ENCODE measurements at regions of chr19 and their contacts with region 1.

Region 1: GRCh38 chr19:21020298-21021227 is at the start of gene ZNF430:
- DNase-seq: peak; percentile 94
- ATAC-seq: peak; percentile 96
- H3K4me3 ChIP-seq: peak within 1 kb of the TSS; percentile 78
- H3K27ac ChIP-seq: peak within 1 kb of the TSS; percentile 89
- H3K4me1 ChIP-seq: no peaks in the 10 kb centered on the region
- H3K27me3 ChIP-seq: no peaks in the 10 kb centered on the region
- CTCF ChIP-seq: no peak
- EP300 ChIP-seq: no peak
- POLR2A ChIP-seq: peak; percentile 91
- RAD21 ChIP-seq: no peak
- polyA plus RNA-seq, gene ZNF430: 4.6 to 6.0 TPM

Region 2: DNA sequence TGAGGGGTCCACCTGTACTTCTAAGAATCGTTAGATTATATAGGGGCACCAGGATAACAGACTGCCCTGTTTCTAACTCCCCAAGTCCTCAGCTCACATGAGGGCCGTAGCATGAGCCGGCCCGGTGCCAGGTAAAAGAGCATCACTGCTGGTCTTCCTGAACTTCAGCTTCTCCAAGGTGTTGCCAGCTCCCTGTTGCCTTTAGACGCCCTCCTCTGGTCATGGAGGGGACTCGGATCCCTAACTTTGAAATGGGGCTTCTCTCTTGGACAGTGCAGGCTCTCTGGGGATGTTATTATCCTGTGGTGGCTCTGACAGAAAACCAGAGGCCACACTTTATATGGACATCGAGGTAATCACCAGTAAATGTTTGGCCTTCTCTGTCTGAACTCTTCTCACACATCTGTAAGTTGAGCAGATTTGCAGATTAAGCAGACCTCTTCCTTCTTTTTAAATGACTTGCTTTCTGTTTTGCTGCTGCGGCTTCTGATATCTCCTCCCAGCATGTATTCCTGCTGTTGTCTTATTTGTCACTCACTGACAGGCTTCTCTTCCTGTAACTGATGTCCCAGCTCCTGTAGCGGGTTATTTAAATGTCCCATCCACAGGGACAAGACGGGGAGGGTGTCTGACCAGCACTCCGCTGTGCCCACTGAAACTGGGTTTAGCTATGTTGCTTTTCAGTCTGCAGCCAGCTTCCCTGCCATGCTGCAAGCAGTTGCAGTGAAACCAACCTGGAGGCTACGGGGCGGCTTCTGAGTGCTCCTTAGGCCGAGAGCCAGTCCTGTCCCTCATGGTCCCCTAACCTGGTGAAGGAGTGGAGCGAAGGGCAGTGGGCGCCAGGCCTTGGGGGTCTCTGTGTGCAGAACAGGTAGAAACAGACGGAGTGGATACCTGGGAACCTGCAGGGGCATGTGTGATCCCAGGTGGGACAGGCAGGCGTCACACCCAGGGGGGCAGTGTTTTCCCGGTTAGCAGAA is 1544.4 kb before region 1 on chr19:
- CTCF ChIA-PET with region 1: no interaction called
- POLR2A ChIA-PET with region 1: no interaction called
- RAD21 ChIA-PET with region 1: no interaction called
- SMC1A ChIA-PET with region 1: no interaction called
- in situ Hi-C with region 1: no loop called
- intact Hi-C with region 1: no loop called
- DNase-seq: no peak
- ATAC-seq: 0 out of 3 replicates have a peak, but pooled peaks have one; percentile 10
- H3K4me3 ChIP-seq: no peak overlapping the region
- H3K27ac ChIP-seq: no peak overlapping the region
- H3K4me1 ChIP-seq: peaks cover 42% of the 10 kb centered on the region
- H3K27me3 ChIP-seq: no peaks in the 10 kb centered on the region
- CTCF ChIP-seq: peak; percentile 22 to 50 (median 41); a peak in 4 of 6 replicates
- EP300 ChIP-seq: no peak
- POLR2A ChIP-seq: no peak
- RAD21 ChIP-seq: peak; percentile 65

Region 3: DNA sequence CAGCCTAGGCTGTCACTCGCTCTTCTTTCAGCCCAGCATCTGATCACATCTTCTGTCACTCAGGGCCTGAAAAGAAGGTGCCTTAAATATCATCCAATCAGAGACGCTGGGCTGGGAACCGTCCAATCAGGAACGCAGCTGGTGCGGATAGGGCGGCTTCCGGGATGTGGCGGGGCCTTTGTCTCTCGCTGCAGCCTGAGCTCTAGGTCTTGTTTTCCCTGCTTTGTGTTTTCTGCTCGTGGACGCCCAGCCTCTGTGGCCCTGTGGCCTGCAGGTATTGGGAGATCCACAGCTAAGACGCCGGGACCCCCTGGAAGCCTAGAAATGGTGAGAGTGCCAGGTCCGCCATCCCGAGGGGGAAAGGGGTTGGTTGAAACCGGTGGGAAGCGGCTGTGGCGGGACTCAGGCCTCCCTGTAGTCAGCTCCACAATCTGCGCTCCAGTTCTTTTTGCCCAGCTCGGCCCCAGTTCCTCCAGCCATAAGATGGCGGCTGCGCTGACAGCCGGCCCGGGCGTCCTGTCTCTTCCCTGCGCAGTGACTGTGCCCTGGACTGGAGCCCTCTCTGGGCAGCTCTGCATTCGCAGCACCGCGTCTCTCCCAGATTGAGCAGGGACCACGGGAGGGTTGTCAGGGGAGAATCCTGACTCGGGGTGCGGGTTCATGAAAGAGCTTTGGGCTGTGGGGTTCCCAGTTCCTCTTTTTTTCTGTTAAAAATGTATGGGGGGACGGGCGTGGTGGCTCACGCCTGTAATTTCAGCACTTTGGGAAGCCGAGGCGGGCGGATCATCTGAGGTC is 97.3 kb before region 1 on chr19 and contains the start of gene ZNF85:
- CTCF ChIA-PET with region 1: no interaction called
- POLR2A ChIA-PET with region 1: no interaction called
- RAD21 ChIA-PET with region 1: interaction called, 11 read pairs
- SMC1A ChIA-PET with region 1: no interaction called
- in situ Hi-C with region 1: no loop called
- intact Hi-C with region 1: no loop called
- DNase-seq: peak; percentile 84
- ATAC-seq: peak; percentile 99
- H3K4me3 ChIP-seq: peak within 1 kb of the TSS; percentile 74
- H3K27ac ChIP-seq: peak within 1 kb of the TSS; percentile 71
- H3K4me1 ChIP-seq: no peaks in the 10 kb centered on the region
- H3K27me3 ChIP-seq: no peaks in the 10 kb centered on the region
- CTCF ChIP-seq: no peak
- EP300 ChIP-seq: no peak
- POLR2A ChIP-seq: peak; percentile 82
- RAD21 ChIP-seq: no peak
- polyA plus RNA-seq, gene ZNF85: 25.8 to 31.7 TPM

Region 4: DNA sequence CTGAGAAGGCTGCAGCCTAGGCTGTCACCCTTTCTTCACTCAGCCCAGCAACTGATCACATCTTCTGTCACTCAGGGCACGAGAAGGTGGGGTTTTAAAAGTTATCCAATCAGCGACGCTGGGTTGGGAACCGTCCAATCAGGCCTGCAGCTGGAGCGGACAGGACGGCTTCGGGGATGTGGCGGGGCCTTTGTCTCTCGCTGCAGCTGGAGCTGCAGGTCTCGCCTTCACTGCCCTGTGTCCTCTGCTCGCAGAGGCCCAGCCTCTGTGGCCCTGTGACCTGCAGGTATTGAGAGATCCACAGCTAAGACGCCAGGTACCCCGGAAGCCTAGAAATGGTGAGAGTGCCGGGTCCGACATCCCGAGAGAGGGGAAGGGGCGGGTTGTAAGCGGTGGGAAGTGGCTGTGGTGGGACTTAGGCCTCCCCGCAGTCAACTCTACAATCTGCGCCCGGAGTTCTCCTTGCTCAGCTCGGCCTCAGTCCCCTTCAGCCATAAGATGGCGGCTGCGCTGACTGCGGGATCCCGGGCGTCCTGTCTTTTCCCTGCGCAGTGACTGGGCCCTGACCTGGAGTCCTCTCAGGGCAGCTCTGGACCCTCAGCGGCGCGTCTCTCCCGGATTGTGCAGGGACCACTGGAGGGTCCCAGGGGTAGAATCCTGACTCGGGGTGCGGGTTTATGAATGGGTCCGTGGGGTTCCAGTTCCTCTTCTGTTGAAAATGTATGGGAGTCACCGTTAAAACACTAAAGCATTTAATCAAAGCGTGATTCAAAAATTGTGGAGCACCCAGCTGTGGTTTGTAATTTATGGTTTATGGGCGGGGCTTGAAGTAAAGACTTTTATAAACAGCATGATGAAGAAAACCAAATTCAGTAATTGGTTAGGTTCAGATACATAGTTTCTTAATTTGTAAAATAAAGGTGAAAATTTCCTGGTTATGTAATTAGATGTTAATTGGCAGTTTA is 61.7 kb after region 1 on chr19 and contains the start of gene ZNF714:
- CTCF ChIA-PET with region 1: no interaction called
- POLR2A ChIA-PET with region 1: interaction called, 3 read pairs
- RAD21 ChIA-PET with region 1: interaction called, 3 read pairs
- SMC1A ChIA-PET with region 1: interaction called, 4 read pairs
- in situ Hi-C with region 1: no loop called
- intact Hi-C with region 1: loop called (anchors 5 kb)
- DNase-seq: peak; percentile 79
- ATAC-seq: peak; percentile 98
- H3K4me3 ChIP-seq: peak within 1 kb of the TSS; percentile 70
- H3K27ac ChIP-seq: peak within 1 kb of the TSS; percentile 70
- H3K4me1 ChIP-seq: no peaks in the 10 kb centered on the region
- H3K27me3 ChIP-seq: no peaks in the 10 kb centered on the region
- CTCF ChIP-seq: no peak
- EP300 ChIP-seq: no peak
- POLR2A ChIP-seq: peak; percentile 88
- RAD21 ChIP-seq: no peak
- polyA plus RNA-seq, gene ZNF714: 4.9 to 5.1 TPM

Region 5: DNA sequence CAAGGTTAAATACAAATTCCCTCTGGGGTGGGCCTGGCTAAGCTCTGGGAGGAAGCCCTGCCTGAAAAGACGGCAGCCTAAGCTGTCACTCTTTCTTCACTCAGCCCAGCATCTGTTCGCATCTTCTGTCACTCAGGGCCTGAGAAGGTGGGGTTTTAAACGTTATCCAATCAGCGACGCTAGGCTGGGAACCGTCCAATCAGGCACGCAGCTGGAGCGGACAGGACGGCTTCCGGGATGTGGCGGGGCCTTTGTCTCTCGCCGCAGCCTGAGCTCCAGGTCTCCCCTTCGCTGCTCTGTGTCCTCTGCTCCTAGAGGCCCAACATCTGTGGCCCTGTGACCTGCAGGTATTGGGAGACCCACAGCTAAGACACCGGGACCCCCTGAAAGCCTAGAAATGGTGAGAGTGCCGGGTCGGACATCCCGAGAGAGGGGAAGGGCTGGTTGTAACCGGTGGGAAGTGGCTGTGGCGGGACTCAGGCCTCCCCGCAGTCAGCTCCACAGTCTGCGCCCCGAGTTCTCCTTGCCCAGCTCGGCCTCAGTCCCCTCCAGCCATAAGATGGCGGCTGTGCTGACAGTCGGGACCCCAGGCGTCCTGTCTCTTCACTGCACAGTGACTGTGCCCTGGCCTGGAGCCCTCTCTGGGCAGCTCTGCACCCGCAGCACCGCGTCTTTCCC is 121.4 kb after region 1 on chr19 and contains the start of gene ZNF431:
- CTCF ChIA-PET with region 1: no interaction called
- POLR2A ChIA-PET with region 1: interaction called, 3 read pairs
- RAD21 ChIA-PET with region 1: interaction called, 8 read pairs
- SMC1A ChIA-PET with region 1: interaction called, 3 read pairs
- in situ Hi-C with region 1: no loop called
- intact Hi-C with region 1: loop called (anchors 5 kb)
- DNase-seq: peak; percentile 89
- ATAC-seq: peak; percentile 100
- H3K4me3 ChIP-seq: peak within 1 kb of the TSS; percentile 99
- H3K27ac ChIP-seq: peak within 1 kb of the TSS; percentile 95
- H3K4me1 ChIP-seq: no peaks in the 10 kb centered on the region
- H3K27me3 ChIP-seq: no peaks in the 10 kb centered on the region
- CTCF ChIP-seq: no peak
- EP300 ChIP-seq: no peak
- POLR2A ChIP-seq: peak; percentile 95
- RAD21 ChIP-seq: no peak
- polyA plus RNA-seq, gene ZNF431: 2.5 to 2.8 TPM

Region 6: GRCh38 chr19:21328885-21329605 is 308.5 kb after region 1 on chr19 and contains the start of gene ZNF708:
- CTCF ChIA-PET with region 1: no interaction called
- POLR2A ChIA-PET with region 1: no interaction called
- RAD21 ChIA-PET with region 1: no interaction called
- SMC1A ChIA-PET with region 1: interaction called, 3 read pairs
- in situ Hi-C with region 1: loop called (anchors 10 kb)
- intact Hi-C with region 1: loop called (anchors 5 kb)
- DNase-seq: peak; percentile 82
- ATAC-seq: peak; percentile 100
- H3K4me3 ChIP-seq: peak within 1 kb of the TSS; percentile 90
- H3K27ac ChIP-seq: peak within 1 kb of the TSS; percentile 96
- H3K4me1 ChIP-seq: no peaks in the 10 kb centered on the region
- H3K27me3 ChIP-seq: no peaks in the 10 kb centered on the region
- CTCF ChIP-seq: no peak
- EP300 ChIP-seq: no peak
- POLR2A ChIP-seq: peak; percentile 95
- RAD21 ChIP-seq: no peak
- polyA plus RNA-seq, gene ZNF708: 2.7 to 2.9 TPM